T-cell (primary cell): ENCODE measurements at regions of chr12 and their contacts with region 1.

Region 1: DNA sequence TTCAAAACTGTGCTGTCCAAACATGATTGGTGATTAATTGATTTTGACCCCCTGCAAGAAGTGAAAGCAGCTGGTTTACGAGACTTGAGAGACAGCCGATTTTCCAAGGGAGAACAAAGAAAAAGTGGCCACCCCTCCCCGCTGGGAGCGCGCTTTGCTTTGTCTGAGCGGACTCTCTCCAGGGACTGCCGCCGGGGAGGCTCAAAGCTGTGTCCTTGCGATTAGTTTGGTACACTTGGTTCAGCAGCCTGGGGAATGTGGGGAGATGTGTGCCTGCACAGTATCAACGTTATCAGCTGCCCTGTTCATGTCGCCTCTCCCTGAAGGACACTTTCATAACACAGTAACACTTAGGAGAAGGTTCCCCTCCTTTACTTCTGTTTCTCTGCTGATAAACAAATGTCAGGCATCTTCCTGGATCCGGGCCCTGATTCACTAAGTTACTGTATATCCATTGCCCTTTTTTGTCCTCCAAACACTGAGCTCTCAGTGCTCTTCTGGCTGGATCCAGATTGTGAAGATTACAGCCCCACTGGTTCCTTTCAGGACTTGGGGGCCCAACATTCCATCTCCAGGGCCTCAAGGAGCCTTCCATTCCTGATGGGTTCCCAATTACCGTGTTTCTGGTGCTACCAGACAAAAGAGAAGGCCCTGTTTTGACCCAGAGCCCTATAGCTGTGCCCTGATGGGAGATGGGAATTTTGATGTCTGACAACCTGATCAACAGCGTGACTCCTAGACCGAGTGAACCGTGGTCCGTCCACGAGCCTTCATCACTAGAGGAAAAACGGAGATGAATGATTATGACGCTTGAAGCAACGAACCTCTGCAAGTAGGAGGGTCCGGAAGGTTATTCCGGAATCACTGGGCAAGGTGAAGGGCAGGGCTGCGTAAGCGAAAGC is 31.7 kb upstream of the TUBA1C start:
- DNase-seq: peak in 1 of 35 experiments; percentile 5
- ATAC-seq: no peak
- H3K4me3 ChIP-seq: no peak overlapping the region
- H3K4me3 Mint-ChIP-seq: peak overlapping the region; percentile 36 to 86 (median 69)
- H3K27ac ChIP-seq: no peak overlapping the region
- H3K27ac Mint-ChIP-seq: peak overlapping the region; percentile 16 to 73
- H3K4me1 ChIP-seq: peaks cover 0 to 17% of the 10 kb centered on the region in 2 experiments
- H3K4me1 Mint-ChIP-seq: peaks cover 5 to 16% (median 7%) of the 10 kb centered on the region in 3 donors
- H3K27me3 ChIP-seq: peaks cover 0 to 4% of the 10 kb centered on the region in 2 experiments
- H3K27me3 Mint-ChIP-seq: no peaks in the 10 kb centered on the region

Region 2: DNA sequence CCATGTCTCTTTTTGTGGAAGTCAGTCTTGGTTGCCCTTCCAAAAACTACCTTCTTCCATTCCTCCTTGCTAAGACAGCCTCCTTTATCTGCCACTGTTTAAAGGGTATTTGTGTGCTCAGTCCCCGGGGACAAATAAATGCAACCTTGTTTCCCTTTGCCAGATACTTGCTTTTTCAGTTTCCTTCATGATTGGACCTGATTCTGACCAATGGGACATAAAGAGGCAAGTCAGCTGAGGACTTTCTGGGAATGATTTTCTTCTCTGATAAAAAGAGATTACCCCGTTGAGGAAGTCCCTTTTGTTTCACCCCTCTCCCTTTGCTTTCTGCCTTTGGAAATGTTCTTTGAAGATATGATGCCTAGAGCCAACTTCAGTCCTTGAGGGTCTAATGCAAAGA is 94.6 kb before region 1 on chr12:
- CTCF ChIA-PET with region 1: interaction called in 1 of 2 experiments, 10 read pairs
- POLR2A ChIA-PET with region 1: no interaction called
- DNase-seq: no peak
- ATAC-seq: no peak
- H3K4me3 ChIP-seq: no peak overlapping the region
- H3K4me3 Mint-ChIP-seq: no peak overlapping the region
- H3K27ac ChIP-seq: no peak overlapping the region
- H3K27ac Mint-ChIP-seq: no peak overlapping the region
- H3K4me1 ChIP-seq: no peaks in the 10 kb centered on the region
- H3K4me1 Mint-ChIP-seq: peaks cover 2 to 4% (median 2%) of the 10 kb centered on the region in 3 donors
- H3K27me3 ChIP-seq: no peaks in the 10 kb centered on the region
- H3K27me3 Mint-ChIP-seq: no peaks in the 10 kb centered on the region

Region 3: GRCh38 chr12:49146406-49146805 is 86.8 kb before region 1 on chr12:
- CTCF ChIA-PET with region 1: interaction called in 1 of 2 experiments, 3 read pairs
- POLR2A ChIA-PET with region 1: interaction called in 1 of 2 experiments, 14 read pairs
- DNase-seq: no peak
- ATAC-seq: no peak
- H3K4me3 ChIP-seq: no peak overlapping the region
- H3K4me3 Mint-ChIP-seq: no peak overlapping the region
- H3K27ac ChIP-seq: no peak overlapping the region
- H3K27ac Mint-ChIP-seq: no peak overlapping the region
- H3K4me1 ChIP-seq: no peaks in the 10 kb centered on the region
- H3K4me1 Mint-ChIP-seq: peaks cover 0 to 6% (median 0%) of the 10 kb centered on the region in 3 donors
- H3K27me3 ChIP-seq: no peaks in the 10 kb centered on the region
- H3K27me3 Mint-ChIP-seq: no peaks in the 10 kb centered on the region

Region 4: DNA sequence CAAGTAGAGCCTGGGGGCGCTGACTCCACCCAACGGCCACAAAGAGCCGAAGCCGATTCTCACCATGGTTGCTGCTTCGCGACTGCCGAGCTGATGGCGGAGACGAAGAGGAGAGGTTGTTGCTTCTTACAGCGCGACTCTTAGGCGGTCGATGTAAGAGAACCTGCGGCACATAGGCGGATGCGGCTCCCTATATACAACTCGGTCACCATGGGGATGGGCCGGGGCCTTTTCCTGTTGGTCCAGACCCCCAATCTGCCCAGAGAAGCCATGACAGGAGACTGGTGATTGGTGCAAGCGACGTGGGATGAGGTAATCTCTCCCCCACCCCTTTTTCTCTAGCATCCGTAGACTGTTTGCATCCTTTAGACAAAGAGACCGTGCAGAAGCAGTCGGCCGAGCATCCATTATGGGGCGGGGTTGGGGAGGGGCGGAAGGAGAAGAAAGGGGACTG is 44.2 kb before region 1 on chr12 and contains the start of gene TUBA1A:
- CTCF ChIA-PET with region 1: interaction called in 1 of 2 experiments, 14 read pairs
- POLR2A ChIA-PET with region 1: interaction called in 1 of 2 experiments, 3 read pairs
- DNase-seq: peak; percentile 86 to 99 (median 97)
- ATAC-seq: peak; percentile 87 to 91 (median 90)
- H3K4me3 ChIP-seq: peak within 1 kb of the TSS; percentile 84 to 95
- H3K4me3 Mint-ChIP-seq: peak within 1 kb of the TSS; percentile 94 to 98 (median 98)
- H3K27ac ChIP-seq: peak within 1 kb of the TSS; percentile 98
- H3K27ac Mint-ChIP-seq: peak within 1 kb of the TSS; percentile 99
- H3K4me1 ChIP-seq: peaks cover 6 to 13% of the 10 kb centered on the region in 2 experiments
- H3K4me1 Mint-ChIP-seq: peaks cover 26 to 29% (median 27%) of the 10 kb centered on the region in 3 donors
- H3K27me3 ChIP-seq: no peaks in the 10 kb centered on the region
- H3K27me3 Mint-ChIP-seq: no peaks in the 10 kb centered on the region
- total RNA-seq, gene TUBA1A: 89.3 to 310 (median 100) TPM